PC-9 (cell line): ENCODE measurements at regions of chr18 and their contacts with region 1.

Region 1: GRCh38 chr18:64119916-64120315 is 29.0 kb downstream of the LINC00305 start:
- DNase-seq: no peak
- H3K4me3 ChIP-seq: no peak overlapping the region
- H3K27ac ChIP-seq: no peak overlapping the region
- H3K4me1 ChIP-seq: no peaks in the 10 kb centered on the region
- H3K27me3 ChIP-seq: no peaks in the 10 kb centered on the region
- CTCF ChIP-seq: peak; percentile 66

Region 2: GRCh38 chr18:64409511-64409910 is 289.6 kb after region 1 on chr18:
- CTCF ChIA-PET with region 1: interaction called, 3 read pairs
- POLR2A ChIA-PET with region 1: no interaction called
- intact Hi-C with region 1: loop called (anchors 1 kb)
- DNase-seq: no peak
- H3K4me3 ChIP-seq: no peak overlapping the region
- H3K27ac ChIP-seq: no peak overlapping the region
- H3K4me1 ChIP-seq: no peaks in the 10 kb centered on the region
- H3K27me3 ChIP-seq: no peaks in the 10 kb centered on the region
- CTCF ChIP-seq: peak; percentile 65